ENCODE measurements at regions of chr1 and their contacts with region 1.

Region 1: GRCh38 chr1:110495926-110496600 is 22.9 kb downstream of the KCNA10 start:
- DNase-seq: peak; percentile 86
- H3K4me3 Mint-ChIP-seq: no peak overlapping the region
- H3K27ac Mint-ChIP-seq: no peak overlapping the region
- H3K4me1 Mint-ChIP-seq: no peaks in the 10 kb centered on the region
- H3K27me3 Mint-ChIP-seq: no peaks in the 10 kb centered on the region

Region 2: GRCh38 chr1:110203021-110203661 is 292.9 kb before region 1 on chr1:
- CTCF ChIA-PET with region 1: interaction called, 80 read pairs
- POLR2A ChIA-PET with region 1: no interaction called
- intact Hi-C with region 1: loop called (anchors 1 kb)
- DNase-seq: peak; percentile 73
- H3K4me3 Mint-ChIP-seq: no peak overlapping the region
- H3K27ac Mint-ChIP-seq: peak overlapping the region; percentile 83
- H3K4me1 Mint-ChIP-seq: peaks cover 15% of the 10 kb centered on the region
- H3K27me3 Mint-ChIP-seq: no peaks in the 10 kb centered on the region

Region 3: GRCh38 chr1:110319332-110320152 is 176.5 kb before region 1 on chr1:
- CTCF ChIA-PET with region 1: interaction called, 27 read pairs
- POLR2A ChIA-PET with region 1: no interaction called
- intact Hi-C with region 1: no loop called
- DNase-seq: no peak
- H3K4me3 Mint-ChIP-seq: no peak overlapping the region
- H3K27ac Mint-ChIP-seq: no peak overlapping the region
- H3K4me1 Mint-ChIP-seq: no peaks in the 10 kb centered on the region
- H3K27me3 Mint-ChIP-seq: no peaks in the 10 kb centered on the region

Region 4: DNA sequence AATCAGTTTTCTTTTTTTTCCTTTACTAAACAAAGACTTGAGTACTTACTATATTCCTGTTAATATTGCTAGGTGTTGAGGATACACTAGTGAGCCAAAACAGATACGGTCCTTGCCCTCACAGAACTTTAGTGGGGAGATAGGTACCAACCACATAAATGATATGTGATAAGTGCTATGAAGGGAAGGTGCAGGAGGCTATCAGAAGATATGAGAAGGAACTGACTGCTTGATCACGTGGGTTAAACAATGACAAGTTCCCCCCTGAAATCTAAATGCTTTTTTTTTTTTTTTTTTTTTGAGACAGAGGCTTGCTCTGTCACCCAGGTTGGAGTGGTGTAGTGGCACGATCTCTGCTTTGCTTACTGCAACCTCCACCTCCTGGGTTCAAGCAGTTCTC is 131.8 kb before region 1 on chr1:
- CTCF ChIA-PET with region 1: no interaction called
- POLR2A ChIA-PET with region 1: no interaction called
- intact Hi-C with region 1: no loop called
- DNase-seq: no peak
- H3K4me3 Mint-ChIP-seq: no peak overlapping the region
- H3K27ac Mint-ChIP-seq: no peak overlapping the region
- H3K4me1 Mint-ChIP-seq: peaks cover 9% of the 10 kb centered on the region
- H3K27me3 Mint-ChIP-seq: no peaks in the 10 kb centered on the region

Region 5: DNA sequence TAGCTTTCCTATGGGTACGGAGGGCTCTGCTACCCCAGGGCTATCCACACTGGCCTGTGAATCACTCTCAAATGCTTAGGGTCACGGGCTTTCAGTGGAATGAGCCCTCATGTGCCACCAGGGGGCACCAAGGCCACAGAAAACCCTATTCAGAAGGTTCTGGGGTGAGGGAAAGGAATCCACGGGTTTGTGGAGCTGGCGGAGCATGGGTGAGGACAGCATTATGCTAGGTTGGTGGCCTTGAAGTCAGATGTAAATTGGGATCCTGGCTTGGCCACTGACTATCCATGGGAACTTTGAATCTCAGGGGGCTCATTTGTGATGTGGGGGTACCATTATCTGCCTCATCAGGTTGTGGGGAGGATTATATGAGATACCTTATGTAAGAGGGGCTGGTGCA is 83.5 kb before region 1 on chr1:
- CTCF ChIA-PET with region 1: interaction called, 125 read pairs
- POLR2A ChIA-PET with region 1: no interaction called
- intact Hi-C with region 1: loop called (anchors 1 kb)
- DNase-seq: peak; percentile 74
- H3K4me3 Mint-ChIP-seq: no peak overlapping the region
- H3K27ac Mint-ChIP-seq: no peak overlapping the region
- H3K4me1 Mint-ChIP-seq: peaks cover 9% of the 10 kb centered on the region
- H3K27me3 Mint-ChIP-seq: no peaks in the 10 kb centered on the region

Region 6: DNA sequence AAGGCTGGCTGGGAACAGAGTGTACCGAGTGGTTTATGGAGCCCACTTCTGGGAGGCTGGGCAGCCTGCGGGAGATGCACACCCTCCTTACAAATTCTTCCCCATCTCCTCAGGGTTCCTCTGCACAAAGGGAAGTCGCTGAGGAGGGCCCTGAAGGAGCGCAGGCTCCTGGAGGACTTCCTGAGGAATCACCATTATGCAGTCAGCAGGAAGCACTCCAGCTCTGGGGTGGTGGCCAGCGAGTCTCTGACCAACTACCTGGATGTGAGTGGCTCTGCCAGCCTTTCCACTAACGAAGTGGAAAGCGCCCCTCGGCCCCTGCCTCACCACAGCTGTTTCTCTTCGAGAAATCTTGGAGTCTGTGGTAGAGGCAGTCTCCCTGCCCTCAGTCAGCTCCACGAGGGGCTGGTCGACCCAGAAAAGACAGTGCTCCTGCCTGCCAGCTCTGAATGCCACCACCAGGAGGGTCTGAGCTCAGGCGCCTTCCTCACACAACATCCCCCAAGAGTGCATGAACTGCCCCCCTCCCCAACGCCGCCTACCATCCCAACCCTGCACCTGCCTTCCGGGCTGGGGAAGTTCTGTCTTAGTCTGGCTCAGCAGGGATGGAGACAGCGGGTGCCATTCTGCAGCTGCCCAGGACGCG is 13.3 kb before region 1 on chr1:
- CTCF ChIA-PET with region 1: interaction called, 41 read pairs
- POLR2A ChIA-PET with region 1: no interaction called
- intact Hi-C with region 1: no loop called
- DNase-seq: no peak
- H3K4me3 Mint-ChIP-seq: no peak overlapping the region
- H3K27ac Mint-ChIP-seq: no peak overlapping the region
- H3K4me1 Mint-ChIP-seq: peaks cover 5% of the 10 kb centered on the region
- H3K27me3 Mint-ChIP-seq: peaks cover 10% of the 10 kb centered on the region

Region 7: DNA sequence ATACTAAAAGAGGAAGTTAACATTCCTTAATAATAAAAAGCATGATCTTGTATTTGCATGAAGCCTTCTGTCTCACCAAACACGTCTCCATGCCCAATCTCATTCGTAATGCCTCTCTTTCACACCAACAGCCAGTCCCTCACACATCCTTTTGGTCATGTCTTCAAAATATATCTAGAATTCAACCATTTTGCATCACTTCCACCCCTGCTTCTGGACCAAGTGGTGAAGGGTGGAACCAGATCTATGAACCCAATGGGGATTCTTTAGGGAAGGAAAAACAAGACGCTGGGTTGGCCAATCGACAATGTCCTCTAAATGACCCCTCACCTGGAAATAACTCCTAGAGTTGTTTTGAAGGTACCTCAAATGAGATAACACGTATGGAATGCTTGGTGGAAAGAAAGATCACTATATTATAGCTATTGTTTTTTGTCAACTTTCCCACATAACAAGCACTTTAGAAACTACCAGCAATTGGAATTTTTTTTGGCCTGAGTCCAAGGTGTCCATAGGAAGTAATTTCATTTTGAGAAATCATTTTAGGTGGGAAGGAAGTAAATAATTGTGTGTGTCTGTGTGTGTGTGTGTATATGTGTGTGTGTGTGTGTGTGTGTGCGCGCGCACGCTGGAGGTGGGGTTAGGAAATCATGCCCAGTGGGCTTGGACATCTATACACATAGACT is 23.2 kb after region 1 on chr1 and contains the start of gene KCNA10:
- CTCF ChIA-PET with region 1: interaction called, 13 read pairs
- POLR2A ChIA-PET with region 1: no interaction called
- intact Hi-C with region 1: no loop called
- DNase-seq: no peak
- H3K4me3 Mint-ChIP-seq: no peak within 1 kb of the TSS
- H3K27ac Mint-ChIP-seq: no peak within 1 kb of the TSS
- H3K4me1 Mint-ChIP-seq: peaks cover under 1% of the 10 kb centered on the region
- H3K27me3 Mint-ChIP-seq: peaks cover 14% of the 10 kb centered on the region
- total RNA-seq, gene KCNA10: not detected

Measured in activated CD4-positive, alpha-beta memory T cell treated with anti-CD3 and anti-CD28 coated beads for 36 hours (primary cell).